Caco-2 (cell line): ENCODE measurements at regions of chr18 and their contacts with region 1.

Region 1: DNA sequence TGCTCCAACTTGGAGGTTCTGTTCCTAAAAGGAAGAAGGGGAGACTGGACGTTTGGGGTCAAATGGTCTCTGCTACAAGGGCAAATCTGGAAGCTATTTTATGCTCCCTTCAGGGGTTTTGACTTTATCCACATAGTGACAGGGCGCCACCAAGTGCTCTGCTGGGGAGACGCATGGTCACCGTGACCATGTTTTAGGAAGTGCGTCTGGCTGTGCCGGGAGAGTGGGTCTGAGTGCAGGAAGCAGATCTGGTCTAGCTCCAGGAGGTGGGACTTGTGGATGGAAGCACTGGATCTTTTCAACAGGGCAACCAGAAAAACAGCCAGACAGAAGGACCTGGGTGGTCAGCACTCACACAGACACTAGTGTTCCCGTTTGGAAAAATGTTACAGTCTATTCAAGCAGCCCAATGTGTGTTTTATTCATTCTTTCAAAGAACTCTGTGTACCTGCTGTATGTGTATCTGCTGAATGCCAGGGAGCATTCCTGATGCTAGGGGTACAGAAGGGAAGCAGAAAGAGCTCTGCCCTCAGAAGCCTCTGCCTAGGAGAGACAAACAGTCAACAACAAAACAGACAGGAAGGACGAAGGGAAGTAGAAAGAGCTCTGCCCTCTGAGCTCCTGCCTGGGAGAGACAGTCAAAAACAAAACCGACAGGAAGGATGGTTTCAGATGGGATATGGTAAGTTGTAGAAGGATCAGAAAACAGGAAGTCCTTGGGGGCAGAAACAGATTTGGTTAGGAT is 14.3 kb downstream of the IMPA2 start:
- DNase-seq: peak; percentile 71 to 73
- H3K4me3 ChIP-seq: no peak overlapping the region
- H3K4me3 Mint-ChIP-seq: no peak overlapping the region
- H3K27ac Mint-ChIP-seq: peak overlapping the region; percentile 84
- H3K4me1 ChIP-seq: peaks cover 16% of the 10 kb centered on the region
- H3K4me1 Mint-ChIP-seq: peaks cover 29% of the 10 kb centered on the region
- H3K27me3 ChIP-seq: no peaks in the 10 kb centered on the region
- H3K27me3 Mint-ChIP-seq: no peaks in the 10 kb centered on the region
- CTCF ChIP-seq: peak; percentile 69 to 84

Region 2: GRCh38 chr18:11654736-11655605 is 340.6 kb before region 1 on chr18:
- CTCF ChIA-PET with region 1: interaction called, 4 read pairs
- POLR2A ChIA-PET with region 1: no interaction called
- intact Hi-C with region 1: loop called (anchors 5 kb)
- DNase-seq: peak in 1 of 2 experiments; percentile 79
- H3K4me3 ChIP-seq: no peak overlapping the region
- H3K4me3 Mint-ChIP-seq: peak overlapping the region; percentile 44
- H3K27ac Mint-ChIP-seq: no peak overlapping the region
- H3K4me1 ChIP-seq: no peaks in the 10 kb centered on the region
- H3K4me1 Mint-ChIP-seq: no peaks in the 10 kb centered on the region
- H3K27me3 ChIP-seq: no peaks in the 10 kb centered on the region
- H3K27me3 Mint-ChIP-seq: peaks cover 10% of the 10 kb centered on the region
- CTCF ChIP-seq: peak; percentile 83 to 88

Region 3: DNA sequence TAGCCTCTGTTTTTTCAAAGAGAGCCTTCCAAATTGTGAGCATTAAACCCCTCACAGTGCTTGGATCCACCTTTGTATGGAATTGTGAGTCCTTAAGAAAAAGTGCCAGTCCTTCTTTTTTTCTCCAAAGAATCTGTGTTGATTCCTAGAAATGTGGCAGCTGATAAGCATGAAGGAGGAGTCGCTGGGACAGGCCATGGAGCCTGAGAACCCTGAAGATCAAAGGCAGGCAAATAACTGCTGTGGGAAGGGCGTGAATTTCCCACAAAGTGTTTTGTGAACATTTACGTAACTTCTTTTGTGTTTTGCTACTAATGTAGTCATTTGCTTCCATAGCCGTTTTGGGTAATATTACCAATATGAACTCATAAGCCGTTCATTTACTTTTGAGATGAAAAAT is 172.1 kb before region 1 on chr18:
- CTCF ChIA-PET with region 1: no interaction called
- POLR2A ChIA-PET with region 1: no interaction called
- intact Hi-C with region 1: no loop called
- DNase-seq: peak; percentile 62 to 71
- H3K4me3 ChIP-seq: no peak overlapping the region
- H3K4me3 Mint-ChIP-seq: peak overlapping the region; percentile 42
- H3K27ac Mint-ChIP-seq: peak overlapping the region; percentile 84
- H3K4me1 ChIP-seq: peaks cover 31% of the 10 kb centered on the region
- H3K4me1 Mint-ChIP-seq: peaks cover 32% of the 10 kb centered on the region
- H3K27me3 ChIP-seq: no peaks in the 10 kb centered on the region
- H3K27me3 Mint-ChIP-seq: no peaks in the 10 kb centered on the region
- CTCF ChIP-seq: no peak

Region 4: DNA sequence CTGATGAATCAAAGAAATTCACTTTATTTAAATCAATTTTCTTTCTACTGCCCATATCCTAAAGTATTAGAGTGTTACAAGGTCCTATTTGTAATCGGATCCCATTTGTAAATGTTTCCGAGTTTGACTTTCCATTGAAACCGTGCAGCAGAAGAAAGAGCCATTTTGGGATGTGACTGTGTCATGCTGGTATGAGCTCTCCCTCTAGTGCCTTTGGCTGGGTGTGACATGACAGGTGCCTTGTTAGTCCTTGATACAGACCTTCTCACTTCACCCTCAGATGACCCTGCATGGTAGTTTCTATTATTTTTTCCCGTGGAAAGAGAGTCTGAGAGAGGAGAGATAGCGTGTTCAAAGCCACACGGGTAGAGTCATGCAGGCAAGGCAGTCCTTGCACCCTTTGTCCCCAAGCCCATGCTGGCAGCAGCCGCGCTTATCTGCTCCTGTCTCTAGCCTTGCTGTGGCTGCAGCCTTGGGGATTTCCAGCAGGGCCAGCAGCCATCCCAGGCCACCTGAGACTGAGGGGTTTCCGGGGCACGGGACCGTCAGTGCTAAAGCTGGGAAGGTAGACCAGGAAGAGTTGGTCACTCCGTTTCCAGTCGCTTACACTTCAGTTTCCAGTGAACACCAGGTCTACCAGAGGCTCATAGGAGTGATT is 123.0 kb before region 1 on chr18:
- CTCF ChIA-PET with region 1: interaction called, 6 read pairs
- POLR2A ChIA-PET with region 1: no interaction called
- intact Hi-C with region 1: loop called (anchors 2 kb)
- DNase-seq: peak; percentile 68 to 71
- H3K4me3 ChIP-seq: no peak overlapping the region
- H3K4me3 Mint-ChIP-seq: no peak overlapping the region
- H3K27ac Mint-ChIP-seq: no peak overlapping the region
- H3K4me1 ChIP-seq: peaks cover 10% of the 10 kb centered on the region; the same call in 1 of the 2 replicates
- H3K4me1 Mint-ChIP-seq: peaks cover 7% of the 10 kb centered on the region
- H3K27me3 ChIP-seq: no peaks in the 10 kb centered on the region
- H3K27me3 Mint-ChIP-seq: no peaks in the 10 kb centered on the region
- CTCF ChIP-seq: peak; percentile 74 to 80

Region 5: DNA sequence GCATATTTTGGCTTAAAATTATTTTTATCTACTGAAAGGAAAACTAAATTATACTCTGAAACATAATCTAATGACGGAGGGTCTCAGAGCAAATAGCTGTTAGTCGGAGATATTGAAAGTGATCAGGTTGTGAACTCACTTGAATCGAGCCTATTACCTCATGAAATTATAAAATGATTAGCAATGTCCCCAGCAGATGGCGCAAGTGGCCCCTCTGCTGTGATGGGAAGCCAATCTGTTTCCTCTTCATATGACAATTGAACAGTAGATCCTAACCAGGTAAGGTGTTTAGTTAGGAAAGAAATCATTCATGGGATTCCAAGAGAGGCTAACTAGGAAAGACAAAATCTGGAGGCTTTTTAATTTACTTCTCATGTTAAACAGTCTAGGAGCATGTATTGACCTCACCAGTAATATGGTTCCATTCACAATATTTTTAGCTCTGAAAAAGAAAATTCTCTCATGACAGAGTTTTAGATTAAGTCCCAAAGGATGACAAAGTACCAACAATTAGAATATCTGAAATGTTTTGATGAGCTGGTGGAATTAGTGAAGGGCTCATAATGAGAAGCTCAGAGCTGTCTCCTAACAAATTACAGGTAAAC is 57.6 kb before region 1 on chr18:
- CTCF ChIA-PET with region 1: interaction called, 62 read pairs
- POLR2A ChIA-PET with region 1: no interaction called
- intact Hi-C with region 1: loop called (anchors 1 kb)
- DNase-seq: peak; percentile 67 to 83
- H3K4me3 ChIP-seq: no peak overlapping the region
- H3K4me3 Mint-ChIP-seq: no peak overlapping the region
- H3K27ac Mint-ChIP-seq: no peak overlapping the region
- H3K4me1 ChIP-seq: no peaks in the 10 kb centered on the region; the same call in 1 of the 2 replicates
- H3K4me1 Mint-ChIP-seq: no peaks in the 10 kb centered on the region
- H3K27me3 ChIP-seq: no peaks in the 10 kb centered on the region
- H3K27me3 Mint-ChIP-seq: no peaks in the 10 kb centered on the region
- CTCF ChIP-seq: peak; percentile 76 to 79

Region 6: DNA sequence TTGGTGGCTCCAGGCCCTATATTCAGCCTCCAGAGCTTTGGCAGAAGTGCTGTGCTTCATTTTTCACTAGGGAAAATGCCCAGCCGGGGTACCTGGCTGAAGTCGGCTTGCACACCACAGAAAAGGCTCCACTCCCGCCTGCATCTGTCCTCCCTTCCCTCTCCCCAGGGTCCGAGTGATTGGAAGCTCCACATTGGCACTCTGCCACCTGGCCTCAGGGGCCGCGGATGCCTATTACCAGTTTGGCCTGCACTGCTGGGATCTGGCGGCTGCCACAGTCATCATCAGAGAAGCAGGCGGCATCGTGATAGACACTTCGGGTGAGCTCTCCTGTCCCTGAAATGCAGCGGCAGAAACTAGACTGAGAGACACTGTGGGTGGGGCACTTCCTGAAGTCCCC is 33.1 kb after region 1 on chr18:
- CTCF ChIA-PET with region 1: no interaction called
- POLR2A ChIA-PET with region 1: no interaction called
- intact Hi-C with region 1: no loop called
- DNase-seq: no peak
- H3K4me3 ChIP-seq: no peak overlapping the region
- H3K4me3 Mint-ChIP-seq: no peak overlapping the region
- H3K27ac Mint-ChIP-seq: no peak overlapping the region
- H3K4me1 ChIP-seq: no peaks in the 10 kb centered on the region
- H3K4me1 Mint-ChIP-seq: no peaks in the 10 kb centered on the region
- H3K27me3 ChIP-seq: no peaks in the 10 kb centered on the region
- H3K27me3 Mint-ChIP-seq: no peaks in the 10 kb centered on the region
- CTCF ChIP-seq: no peak

Region 7: GRCh38 chr18:12038639-12039417 is 43.2 kb after region 1 on chr18:
- CTCF ChIA-PET with region 1: interaction called, 15 read pairs
- POLR2A ChIA-PET with region 1: no interaction called
- intact Hi-C with region 1: loop called (anchors 2 kb)
- DNase-seq: peak; percentile 83 to 90
- H3K4me3 ChIP-seq: peak overlapping the region; percentile 52
- H3K4me3 Mint-ChIP-seq: peak overlapping the region; percentile 80
- H3K27ac Mint-ChIP-seq: no peak overlapping the region
- H3K4me1 ChIP-seq: peaks cover 3% of the 10 kb centered on the region; the same call in 1 of the 2 replicates
- H3K4me1 Mint-ChIP-seq: no peaks in the 10 kb centered on the region
- H3K27me3 ChIP-seq: no peaks in the 10 kb centered on the region
- H3K27me3 Mint-ChIP-seq: peaks cover 2% of the 10 kb centered on the region
- CTCF ChIP-seq: peak; percentile 96 to 97